Mammary epithelial cell (primary cell): ENCODE measurements at regions of chr10 and their contacts with region 1.

Region 1: DNA sequence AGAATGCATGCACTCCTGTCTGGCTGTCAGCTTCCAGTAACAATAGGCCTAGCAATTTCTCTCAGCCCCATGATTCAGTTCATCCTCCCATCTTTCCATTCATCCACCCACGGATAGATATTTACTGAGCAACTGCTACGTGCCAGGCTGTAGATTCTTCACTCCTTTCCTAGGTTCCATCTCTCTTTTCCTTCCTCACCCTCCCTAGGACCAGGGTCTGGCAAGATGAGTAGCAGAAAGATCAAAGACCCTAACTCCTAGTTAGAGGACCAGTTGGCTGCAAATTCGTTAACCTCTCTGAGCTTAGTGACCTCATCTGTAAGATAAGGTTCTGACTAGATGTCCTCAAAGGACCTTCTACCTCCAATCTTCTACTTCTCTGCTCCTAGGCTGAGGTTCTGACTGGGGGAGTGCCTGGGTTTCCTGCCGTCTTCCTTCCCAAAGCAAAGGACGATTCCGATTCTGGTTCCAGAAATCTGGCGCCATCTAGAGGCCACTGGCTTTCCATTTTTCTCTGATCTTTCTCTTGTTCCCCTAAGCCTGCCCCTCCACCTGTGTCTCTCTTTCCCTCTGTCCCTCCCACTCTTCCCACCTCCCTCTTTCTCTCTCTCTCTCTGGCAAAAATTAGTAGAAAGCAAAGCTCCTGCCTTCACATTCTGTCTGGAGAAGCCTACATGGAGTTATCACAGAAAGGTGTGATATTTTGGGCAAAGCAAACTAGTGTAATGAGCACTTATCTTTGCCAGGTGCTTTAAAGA is 26.2 kb downstream of the TBATA start:
- DNase-seq: peak; percentile 41
- H3K4me3 ChIP-seq: no peak overlapping the region
- H3K27ac ChIP-seq: no peak overlapping the region
- H3K4me1 ChIP-seq: no peaks in the 10 kb centered on the region
- H3K27me3 ChIP-seq: peaks cover 9% of the 10 kb centered on the region
- CTCF ChIP-seq: peak; percentile 54 to 81

Region 2: GRCh38 chr10:70461215-70461986 is 297.5 kb before region 1 on chr10:
- CTCF ChIA-PET with region 1: no interaction called
- dilution Hi-C with region 1: no loop called
- in situ Hi-C with region 1: no loop called
- intact Hi-C with region 1: loop called (anchors 1 kb)
- DNase-seq: peak; percentile 48
- H3K4me3 ChIP-seq: no peak overlapping the region
- H3K27ac ChIP-seq: no peak overlapping the region
- H3K4me1 ChIP-seq: peaks cover 19% of the 10 kb centered on the region
- H3K27me3 ChIP-seq: peaks cover 3% of the 10 kb centered on the region
- CTCF ChIP-seq: peak; percentile 86 to 88

Region 3: GRCh38 chr10:70558871-70559810 is 199.8 kb before region 1 on chr10:
- CTCF ChIA-PET with region 1: no interaction called
- dilution Hi-C with region 1: no loop called
- in situ Hi-C with region 1: loop called (anchors 5 to 10 kb)
- intact Hi-C with region 1: loop called (anchors 1 kb)
- DNase-seq: peak; percentile 42
- H3K4me3 ChIP-seq: no peak overlapping the region
- H3K27ac ChIP-seq: no peak overlapping the region
- H3K4me1 ChIP-seq: no peaks in the 10 kb centered on the region
- H3K27me3 ChIP-seq: peaks cover 3% of the 10 kb centered on the region
- CTCF ChIP-seq: peak; percentile 47 to 60

Region 4: DNA sequence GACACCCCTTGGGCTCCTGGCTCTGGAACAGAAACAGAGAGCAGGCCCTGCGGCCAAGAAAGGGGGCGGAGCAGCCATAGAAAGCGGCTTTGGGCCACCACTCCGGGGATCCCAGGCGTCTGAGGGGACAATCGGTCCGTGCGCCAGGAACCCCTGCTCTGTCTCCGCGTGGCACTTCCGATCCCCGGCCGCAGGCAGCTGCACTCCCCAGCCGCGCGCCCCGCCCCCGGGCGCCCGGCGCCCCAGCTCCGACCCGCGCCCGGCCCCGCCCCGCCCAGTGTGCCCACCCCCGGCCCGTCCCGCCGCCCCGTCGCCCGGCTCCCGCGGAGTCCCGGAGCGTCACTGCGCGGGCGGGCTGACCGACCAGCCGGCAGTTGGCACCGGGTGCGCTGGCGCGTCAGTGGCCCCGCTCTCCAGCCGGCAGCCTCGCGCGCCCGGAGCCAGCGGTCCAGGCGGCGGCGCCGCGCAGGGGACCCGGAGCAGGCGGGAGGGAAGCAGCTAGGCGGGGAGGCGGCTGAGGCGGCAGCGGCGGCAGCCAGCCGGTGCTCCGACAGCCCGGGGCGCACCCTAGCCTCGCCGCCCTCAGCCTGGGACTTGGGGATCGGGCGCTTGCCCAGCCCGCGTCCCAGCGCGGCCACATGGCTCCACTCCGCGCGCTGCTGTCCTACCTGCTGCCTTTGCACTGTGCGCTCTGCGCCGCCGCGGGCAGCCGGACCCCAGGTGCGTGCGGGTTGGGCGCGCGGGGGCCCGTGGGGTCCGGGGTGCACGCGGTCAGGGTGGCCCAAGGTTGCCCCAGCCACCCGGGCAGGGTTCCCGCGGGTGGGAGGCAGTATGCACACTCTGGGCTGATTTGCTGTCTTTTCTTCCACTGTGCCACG is 86.5 kb before region 1 on chr10 and contains the start of gene ADAMTS14:
- CTCF ChIA-PET with region 1: no interaction called
- dilution Hi-C with region 1: loop called (anchors 5 kb)
- in situ Hi-C with region 1: no loop called
- intact Hi-C with region 1: no loop called
- DNase-seq: no peak
- H3K4me3 ChIP-seq: peak within 1 kb of the TSS in 2 of 3 experiments; percentile 26 to 30
- H3K27ac ChIP-seq: no peak within 1 kb of the TSS
- H3K4me1 ChIP-seq: peaks cover 11% of the 10 kb centered on the region
- H3K27me3 ChIP-seq: peaks cover 14% of the 10 kb centered on the region
- CTCF ChIP-seq: no peak
- total RNA-seq, gene ADAMTS14: 0.35 to 0.50 TPM

Region 5: GRCh38 chr10:70863470-70864160 is 104.7 kb after region 1 on chr10:
- CTCF ChIA-PET with region 1: no interaction called
- dilution Hi-C with region 1: loop called (anchors 5 kb)
- in situ Hi-C with region 1: no loop called
- intact Hi-C with region 1: no loop called
- DNase-seq: no peak
- H3K4me3 ChIP-seq: no peak overlapping the region
- H3K27ac ChIP-seq: no peak overlapping the region
- H3K4me1 ChIP-seq: peaks cover 12% of the 10 kb centered on the region
- H3K27me3 ChIP-seq: no peaks in the 10 kb centered on the region
- CTCF ChIP-seq: no peak